Tibial artery (tissue), 4 donors: ENCODE measurements at regions of chr4 and their contacts with region 1.

Region 1: DNA sequence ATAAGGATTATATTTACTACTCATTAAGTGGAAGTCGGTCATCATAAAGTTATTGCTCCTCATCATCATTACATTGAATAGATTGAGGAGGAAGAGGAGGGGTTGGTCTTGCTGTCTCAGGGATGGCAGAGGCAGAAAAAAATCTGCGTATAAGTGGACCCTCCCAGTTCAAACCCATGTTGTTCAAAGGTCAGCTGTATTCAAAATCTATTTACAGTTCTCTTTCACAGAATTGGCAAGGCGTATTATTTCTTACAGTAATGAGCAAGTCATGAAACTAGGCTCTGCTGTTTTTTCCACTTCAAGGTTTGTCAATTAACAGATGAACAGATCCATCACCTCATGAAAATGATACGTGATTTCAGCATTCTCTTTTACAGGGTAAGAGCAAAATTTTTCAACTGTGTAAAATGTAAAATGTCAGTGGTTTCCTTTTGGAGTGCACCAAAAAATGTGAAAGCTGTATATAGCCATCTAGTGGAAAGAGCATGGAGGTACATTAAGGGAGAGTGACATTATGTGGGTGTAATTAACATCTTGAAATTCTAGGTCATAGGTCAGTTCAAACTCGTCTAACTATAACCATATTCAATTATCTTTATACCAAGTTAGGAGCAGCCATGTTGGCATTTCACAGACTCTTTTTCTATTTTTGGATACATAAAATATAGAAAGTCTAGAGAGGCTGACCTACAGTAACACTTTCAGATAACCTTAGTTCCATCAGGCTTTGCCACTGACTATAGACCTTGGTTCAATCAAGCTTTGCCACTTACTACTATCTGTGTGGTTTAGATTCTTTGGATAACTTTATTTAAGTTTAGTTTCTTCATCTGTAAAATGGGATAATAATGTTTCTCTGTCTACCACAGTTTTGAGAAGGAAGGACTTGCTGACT is 30.1 kb downstream of the NEIL3 start:
- DNase-seq: no peak
- H3K4me3 ChIP-seq: no peak overlapping the region
- H3K27ac ChIP-seq: no peak overlapping the region
- H3K4me1 ChIP-seq: no peaks in the 10 kb centered on the region
- H3K27me3 ChIP-seq: no peaks in the 10 kb centered on the region
- CTCF ChIP-seq: peak; percentile 64 to 75

Region 2: GRCh38 chr4:177016541-177017141 is 323.1 kb before region 1 on chr4:
- intact Hi-C with region 1: no loop called
- DNase-seq: no peak
- H3K4me3 ChIP-seq: no peak overlapping the region
- H3K27ac ChIP-seq: no peak overlapping the region
- H3K4me1 ChIP-seq: no peaks in the 10 kb centered on the region
- H3K27me3 ChIP-seq: no peaks in the 10 kb centered on the region
- CTCF ChIP-seq: no peak

Region 3: DNA sequence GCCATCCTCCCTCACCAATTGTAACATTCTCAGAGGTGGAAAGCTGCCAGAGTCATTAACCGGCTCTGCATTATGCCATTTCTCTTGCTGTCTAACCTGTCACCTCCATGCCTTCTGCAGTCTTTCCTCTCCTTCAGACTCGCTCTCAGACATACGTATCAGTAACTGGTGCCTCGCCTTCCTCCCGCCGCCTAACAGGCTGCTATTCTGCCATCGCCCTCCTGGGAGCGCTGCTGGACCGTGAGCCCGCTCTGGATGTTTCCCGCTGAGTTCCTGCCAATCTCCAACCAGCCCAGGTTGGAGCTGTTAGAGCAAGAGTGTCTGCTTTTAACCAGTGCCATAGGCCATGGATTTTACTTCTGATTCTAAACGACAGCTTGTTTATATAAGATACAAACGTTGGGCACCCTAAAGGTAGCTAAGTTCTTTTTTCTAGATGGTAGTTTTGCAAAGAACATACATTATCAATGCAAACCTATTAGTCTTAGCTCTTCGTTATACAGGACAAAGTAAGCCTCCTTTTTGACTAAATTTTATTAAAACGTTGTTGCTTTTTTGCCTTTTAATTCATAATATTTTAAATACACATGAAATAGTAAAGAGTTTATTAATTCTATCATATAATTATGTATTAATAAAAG is 89.5 kb before region 1 on chr4:
- intact Hi-C with region 1: loop called (anchors 5 kb)
- DNase-seq: peak; percentile 41 to 73
- H3K4me3 ChIP-seq: no peak overlapping the region
- H3K27ac ChIP-seq: no peak overlapping the region
- H3K4me1 ChIP-seq: no peaks in the 10 kb centered on the region
- H3K27me3 ChIP-seq: no peaks in the 10 kb centered on the region
- CTCF ChIP-seq: peak; percentile 83 to 96

Region 4: GRCh38 chr4:177302371-177303100 is 37.2 kb before region 1 on chr4:
- intact Hi-C with region 1: no loop called
- DNase-seq: no peak
- H3K4me3 ChIP-seq: no peak overlapping the region
- H3K27ac ChIP-seq: peak overlapping the region; percentile 32 to 43
- H3K4me1 ChIP-seq: peaks cover 0 to 29% (median 2%) of the 10 kb centered on the region in 4 donors
- H3K27me3 ChIP-seq: no peaks in the 10 kb centered on the region
- CTCF ChIP-seq: no peak